ENCODE measurements at regions of chr1 and their contacts with region 1.

Region 1: GRCh38 chr1:31705080-31705866 is 1.5 kb upstream of the COL16A1 start:
- DNase-seq: peak; percentile 86
- ATAC-seq: peak; percentile 63

Region 2: DNA sequence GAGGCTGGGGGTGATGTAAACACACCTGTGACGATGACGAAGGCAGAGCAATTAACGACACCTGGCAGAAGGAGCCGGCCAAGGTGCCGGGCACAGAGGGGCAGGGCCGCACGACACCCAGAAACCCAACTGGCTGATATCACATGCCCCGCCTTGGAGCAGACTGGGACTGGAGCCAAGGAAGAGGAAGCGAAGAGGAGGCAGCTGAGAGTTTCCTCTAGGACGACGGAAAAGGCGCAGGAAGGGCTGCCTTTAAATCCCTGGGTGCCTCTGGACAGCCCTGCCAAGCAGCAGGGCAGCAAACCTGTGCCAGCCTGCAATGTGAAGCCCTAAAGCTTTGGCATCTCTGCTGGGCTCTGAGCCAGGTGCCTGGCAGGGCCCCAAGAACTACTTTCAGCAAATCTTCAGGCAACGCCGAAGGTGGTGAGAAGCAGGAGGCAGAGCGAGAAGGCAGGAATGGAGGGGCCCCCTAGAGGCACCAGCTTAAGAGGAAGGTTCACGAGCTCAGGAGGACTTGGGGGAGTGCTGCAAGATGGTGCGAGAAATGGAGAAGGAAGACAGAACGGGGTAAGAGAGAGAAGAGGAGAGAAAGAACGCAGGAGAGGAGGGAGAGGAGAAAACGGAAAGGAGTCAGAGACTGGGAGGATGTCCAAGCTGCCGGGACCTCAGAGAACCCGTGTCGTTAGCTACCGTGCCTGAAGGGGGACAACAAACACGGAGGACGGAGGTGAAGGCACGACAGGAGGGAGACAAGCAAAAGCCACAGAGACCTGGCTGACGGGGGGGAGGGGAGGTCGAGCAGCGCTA is 35.3 kb before region 1 on chr1:
- intact Hi-C with region 1: loop called (anchors 5 kb)
- DNase-seq: peak; percentile 86
- ATAC-seq: peak; percentile 44

Region 3: GRCh38 chr1:32858791-32859190 is 1153.5 kb after region 1 on chr1:
- intact Hi-C with region 1: no loop called
- DNase-seq: no peak
- ATAC-seq: no peak

Measured in sciatic nerve (tissue), 2 donors.